A673 (cell line): ENCODE measurements at regions of chr4 and their contacts with region 1.

Region 1: GRCh38 chr4:161581262-161582230 is 582.3 kb downstream of the FSTL5 start:
- DNase-seq: peak; percentile 45
- H3K4me3 ChIP-seq: no peak overlapping the region
- H3K27ac ChIP-seq: peak overlapping the region; percentile 79
- H3K4me1 ChIP-seq: peaks cover 47% of the 10 kb centered on the region
- H3K27me3 ChIP-seq: no peaks in the 10 kb centered on the region
- CTCF ChIP-seq: no peak

Region 2: DNA sequence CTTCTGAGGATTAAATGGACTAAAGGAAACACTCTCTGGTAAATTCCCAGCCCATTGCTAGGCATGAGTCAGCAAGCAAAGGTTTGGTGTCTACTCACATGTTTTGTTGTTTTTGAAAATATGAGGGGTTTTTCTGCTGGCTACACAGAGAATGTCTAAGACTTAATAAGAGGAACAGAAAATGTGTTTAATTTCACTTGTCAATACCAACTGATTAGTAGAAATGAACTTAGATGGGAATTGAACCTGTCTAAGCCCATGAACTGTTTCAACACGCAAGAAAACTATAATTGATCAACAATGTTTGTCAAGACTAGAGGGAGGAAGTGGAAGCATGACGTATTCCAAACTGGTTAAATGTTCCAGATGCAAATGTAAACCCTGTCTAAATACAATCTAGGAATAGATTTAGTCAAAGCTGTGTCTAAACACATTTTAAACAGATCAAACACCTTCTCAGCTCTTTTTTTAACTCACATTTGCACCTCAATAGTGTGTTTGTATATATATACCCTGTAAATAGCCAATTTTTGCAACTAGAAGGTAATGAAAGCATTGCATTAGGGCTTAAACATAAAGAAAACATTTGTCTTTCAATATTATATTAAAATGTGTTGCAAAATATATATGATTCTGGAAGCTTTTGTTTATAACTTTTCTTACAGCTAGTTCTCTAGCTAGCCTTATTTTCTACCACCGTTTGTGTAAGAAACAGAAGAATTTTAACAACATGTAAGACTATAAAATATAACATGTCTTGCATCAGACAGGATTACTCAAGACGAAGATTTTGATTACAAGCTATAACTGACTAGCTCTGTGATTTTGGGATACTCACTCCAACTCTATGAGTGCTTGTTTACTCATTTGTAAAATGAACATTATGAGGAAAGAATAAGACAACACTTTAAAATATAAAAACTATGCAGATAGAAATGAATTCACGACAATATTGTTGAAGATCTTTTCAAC is 25.6 kb before region 1 on chr4:
- CTCF ChIA-PET with region 1: no interaction called
- POLR2A ChIA-PET with region 1: interaction called, 10 read pairs
- intact Hi-C with region 1: no loop called
- DNase-seq: peak; percentile 45
- H3K4me3 ChIP-seq: no peak overlapping the region
- H3K27ac ChIP-seq: peak overlapping the region; percentile 78
- H3K4me1 ChIP-seq: peaks cover 52% of the 10 kb centered on the region
- H3K27me3 ChIP-seq: no peaks in the 10 kb centered on the region
- CTCF ChIP-seq: no peak

Region 3: DNA sequence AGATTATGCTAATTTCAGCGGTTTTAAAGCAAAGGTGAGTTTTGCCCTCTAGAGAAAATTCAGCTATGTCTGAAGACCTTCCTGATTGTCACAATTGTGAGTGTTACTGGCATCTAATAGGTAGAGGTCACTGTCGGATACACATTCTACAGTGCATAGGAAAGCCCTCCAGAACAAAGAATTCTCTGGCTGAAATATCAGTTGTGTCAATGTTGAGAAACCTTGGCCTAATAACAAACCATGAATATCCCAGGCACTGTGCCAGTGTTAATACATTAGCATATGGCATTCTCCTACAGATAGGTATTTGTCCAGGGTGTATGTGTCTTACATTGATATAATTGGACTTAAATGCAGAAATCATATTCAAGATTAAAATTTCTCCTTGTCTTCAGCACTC is 288.0 kb after region 1 on chr4:
- CTCF ChIA-PET with region 1: no interaction called
- POLR2A ChIA-PET with region 1: no interaction called
- intact Hi-C with region 1: no loop called
- DNase-seq: no peak
- H3K4me3 ChIP-seq: no peak overlapping the region
- H3K27ac ChIP-seq: no peak overlapping the region
- H3K4me1 ChIP-seq: no peaks in the 10 kb centered on the region
- H3K27me3 ChIP-seq: no peaks in the 10 kb centered on the region
- CTCF ChIP-seq: no peak

Region 4: GRCh38 chr4:161916035-161916434 is 334.5 kb after region 1 on chr4:
- CTCF ChIA-PET with region 1: no interaction called
- POLR2A ChIA-PET with region 1: no interaction called
- intact Hi-C with region 1: no loop called
- DNase-seq: no peak
- H3K4me3 ChIP-seq: no peak overlapping the region
- H3K27ac ChIP-seq: no peak overlapping the region
- H3K4me1 ChIP-seq: no peaks in the 10 kb centered on the region
- H3K27me3 ChIP-seq: no peaks in the 10 kb centered on the region
- CTCF ChIP-seq: no peak